ENCODE measurements at regions of chr2 and their contacts with region 1.

Region 1: GRCh38 chr2:71923887-71924533 is 223.7 kb downstream of the CYP26B1 start:
- DNase-seq: peak; percentile 76
- H3K4me3 ChIP-seq: no peak overlapping the region
- H3K27ac ChIP-seq: no peak overlapping the region
- H3K4me1 ChIP-seq: no peaks in the 10 kb centered on the region
- H3K27me3 ChIP-seq: no peaks in the 10 kb centered on the region
- CTCF ChIP-seq: peak; percentile 86

Region 2: GRCh38 chr2:71989671-71990070 is 65.7 kb after region 1 on chr2:
- intact Hi-C with region 1: loop called (anchors 5 kb)
- DNase-seq: no peak
- H3K4me3 ChIP-seq: no peak overlapping the region
- H3K27ac ChIP-seq: no peak overlapping the region
- H3K4me1 ChIP-seq: no peaks in the 10 kb centered on the region
- H3K27me3 ChIP-seq: no peaks in the 10 kb centered on the region
- CTCF ChIP-seq: no peak

Region 3: DNA sequence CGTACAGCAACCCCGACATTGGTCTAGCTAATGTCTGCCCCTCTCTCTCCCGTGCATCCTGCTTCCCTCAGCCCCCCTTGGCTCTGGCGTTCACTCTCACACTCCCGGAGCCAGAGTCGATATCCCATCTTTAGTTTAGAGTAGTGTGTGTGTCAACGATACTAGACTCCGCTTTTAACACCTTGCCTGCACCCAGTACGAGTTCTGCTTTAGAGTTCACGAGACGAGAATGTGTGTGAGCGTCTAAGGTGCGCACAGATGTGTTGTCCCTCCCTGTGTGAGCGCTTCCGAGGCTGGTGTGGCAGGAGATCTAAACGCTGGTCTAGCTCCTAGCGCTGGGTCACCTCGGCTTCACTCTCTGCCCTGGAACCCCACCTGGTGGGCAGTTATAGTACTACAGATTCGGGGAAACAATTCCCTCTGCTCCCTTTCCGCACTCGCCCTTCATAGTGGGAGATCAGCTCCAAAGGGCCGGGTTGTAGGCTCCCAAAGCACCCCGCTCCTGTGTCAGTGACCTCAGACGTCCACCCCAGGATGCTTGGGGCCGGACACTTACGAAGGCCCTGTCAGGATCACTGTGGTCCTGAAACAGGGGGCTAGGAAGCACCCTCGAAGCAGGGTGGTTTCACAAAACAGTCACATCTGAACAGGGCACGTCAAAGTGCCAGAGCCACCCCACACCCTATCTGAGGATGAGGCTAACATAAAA is 226.3 kb after region 1 on chr2:
- intact Hi-C with region 1: loop called (anchors 2 kb)
- DNase-seq: peak; percentile 92
- H3K4me3 ChIP-seq: peak overlapping the region; percentile 37
- H3K27ac ChIP-seq: no peak overlapping the region
- H3K4me1 ChIP-seq: peaks cover 24% of the 10 kb centered on the region
- H3K27me3 ChIP-seq: peaks cover 40% of the 10 kb centered on the region
- CTCF ChIP-seq: peak; percentile 75

Region 4: GRCh38 chr2:72340665-72341064 is 416.7 kb after region 1 on chr2:
- intact Hi-C with region 1: no loop called
- DNase-seq: no peak
- H3K4me3 ChIP-seq: no peak overlapping the region
- H3K27ac ChIP-seq: no peak overlapping the region
- H3K4me1 ChIP-seq: no peaks in the 10 kb centered on the region
- H3K27me3 ChIP-seq: no peaks in the 10 kb centered on the region
- CTCF ChIP-seq: no peak

Region 5: GRCh38 chr2:72579591-72580180 is 655.7 kb after region 1 on chr2:
- intact Hi-C with region 1: loop called (anchors 5 kb)
- DNase-seq: no peak
- H3K4me3 ChIP-seq: no peak overlapping the region
- H3K27ac ChIP-seq: no peak overlapping the region
- H3K4me1 ChIP-seq: no peaks in the 10 kb centered on the region
- H3K27me3 ChIP-seq: no peaks in the 10 kb centered on the region
- CTCF ChIP-seq: peak; percentile 66

Region 6: DNA sequence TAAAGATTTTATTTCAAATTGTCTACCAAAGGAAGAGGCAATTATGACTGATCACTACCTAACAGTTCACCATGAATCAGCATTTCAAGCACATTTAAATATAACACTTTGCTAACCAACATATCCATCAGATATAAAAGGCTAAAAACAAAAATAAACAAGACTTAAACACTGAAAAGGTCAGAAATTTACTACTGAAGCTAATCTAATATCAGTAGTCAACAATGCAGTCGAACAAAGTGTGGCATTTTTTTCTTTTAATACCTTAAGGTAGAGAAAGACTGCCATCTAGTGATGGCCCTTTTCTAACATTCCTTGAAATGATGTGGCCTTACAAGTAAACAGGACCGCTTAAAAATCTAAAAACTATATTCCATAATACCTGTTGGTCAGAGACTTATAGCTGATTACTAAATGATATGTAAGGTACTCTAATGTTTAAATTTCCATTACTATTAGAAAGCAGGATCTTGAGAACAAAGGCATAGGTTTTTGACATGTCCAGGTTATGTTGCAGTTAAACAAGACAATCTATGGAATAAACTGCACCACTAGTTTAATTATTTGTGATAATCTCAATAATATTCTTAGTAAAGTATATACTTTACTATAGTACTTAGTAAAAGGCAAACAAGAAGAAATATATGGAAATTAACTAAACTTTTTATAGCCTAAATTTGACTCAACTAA is 821.8 kb after region 1 on chr2:
- intact Hi-C with region 1: loop called (anchors 5 kb)
- DNase-seq: no peak
- H3K4me3 ChIP-seq: no peak overlapping the region
- H3K27ac ChIP-seq: no peak overlapping the region
- H3K4me1 ChIP-seq: no peaks in the 10 kb centered on the region
- H3K27me3 ChIP-seq: no peaks in the 10 kb centered on the region
- CTCF ChIP-seq: peak; percentile 62

Measured in colonic mucosa (tissue), 4 donors.